CD4-positive, alpha-beta T cell (primary cell): ENCODE measurements at regions of chr19 and their contacts with region 1.

Region 1: GRCh38 chr19:11558881-11559828 is at the start of gene ELOF1:
- DNase-seq: peak; percentile 90 to 99 (median 96)
- ATAC-seq: peak; percentile 93
- H3K4me3 ChIP-seq: peak within 1 kb of the TSS; percentile 94
- H3K4me3 Mint-ChIP-seq: peak within 1 kb of the TSS; percentile 96
- H3K27ac ChIP-seq: peak within 1 kb of the TSS; percentile 47 to 64
- H3K27ac Mint-ChIP-seq: peak within 1 kb of the TSS; percentile 79
- H3K4me1 ChIP-seq: peaks cover 40% of the 10 kb centered on the region
- H3K4me1 Mint-ChIP-seq: peaks cover 41% of the 10 kb centered on the region
- H3K27me3 ChIP-seq: no peaks in the 10 kb centered on the region
- H3K27me3 Mint-ChIP-seq: no peaks in the 10 kb centered on the region
- CTCF ChIP-seq: no peak
- total RNA-seq, gene ELOF1: 31.8 to 33.2 TPM

Region 2: GRCh38 chr19:11528551-11529341 is 30.4 kb before region 1 on chr19 and contains the start of gene ECSIT:
- CTCF ChIA-PET with region 1: interaction called, 4 read pairs
- POLR2A ChIA-PET with region 1: interaction called, 10 read pairs
- intact Hi-C with region 1: loop called (anchors 2 kb)
- DNase-seq: peak; percentile 85 to 96 (median 88)
- ATAC-seq: peak; percentile 99
- H3K4me3 ChIP-seq: peak within 1 kb of the TSS; percentile 70
- H3K4me3 Mint-ChIP-seq: peak within 1 kb of the TSS; percentile 97
- H3K27ac ChIP-seq: peak within 1 kb of the TSS; percentile 71 to 78
- H3K27ac Mint-ChIP-seq: peak within 1 kb of the TSS; percentile 93
- H3K4me1 ChIP-seq: peaks cover 19% of the 10 kb centered on the region
- H3K4me1 Mint-ChIP-seq: peaks cover 20% of the 10 kb centered on the region
- H3K27me3 ChIP-seq: no peaks in the 10 kb centered on the region
- H3K27me3 Mint-ChIP-seq: no peaks in the 10 kb centered on the region
- CTCF ChIP-seq: no peak
- total RNA-seq, gene ECSIT: 27.2 to 27.4 TPM

Region 3: DNA sequence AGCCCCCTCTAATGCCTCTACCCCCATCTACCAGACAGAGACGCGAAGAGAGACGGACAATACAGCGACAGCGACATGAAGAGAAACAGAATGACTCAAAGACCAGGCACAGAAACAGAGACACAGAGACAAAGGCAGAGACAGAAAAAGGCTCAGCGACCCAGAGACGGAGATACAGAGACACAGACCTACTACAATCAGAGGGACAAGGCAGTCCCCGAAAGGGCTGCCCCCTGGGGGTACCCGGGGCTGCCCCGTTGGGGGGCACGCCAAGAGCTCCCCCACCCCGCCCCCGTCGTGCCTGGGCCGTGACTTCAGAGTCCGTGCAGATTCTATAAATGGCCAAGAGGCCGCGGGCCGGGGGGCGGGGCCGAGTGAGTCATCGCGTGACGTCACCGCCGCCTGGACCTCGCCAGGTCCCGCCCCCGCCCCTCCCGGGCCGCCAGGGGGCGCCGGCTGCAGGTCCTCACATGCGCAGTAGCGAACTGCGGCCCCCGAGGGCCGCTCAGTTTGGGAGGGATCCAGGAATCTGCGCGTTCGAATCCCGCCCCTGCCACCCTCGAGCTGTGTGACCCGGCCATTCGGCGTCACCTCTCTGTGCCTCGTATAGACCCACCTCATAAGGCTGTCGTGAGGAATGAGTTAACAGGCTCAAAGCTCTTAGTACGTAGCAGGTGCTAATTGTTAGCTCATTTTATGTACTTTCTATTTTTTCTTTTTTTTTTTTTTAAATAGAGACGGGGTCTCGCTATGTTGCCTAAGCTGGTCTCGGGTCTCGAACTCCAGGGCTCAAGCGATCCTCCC is 23.2 kb before region 1 on chr19:
- CTCF ChIA-PET with region 1: interaction called, 5 read pairs
- POLR2A ChIA-PET with region 1: interaction called, 8 read pairs
- intact Hi-C with region 1: loop called in 1 of 2 experiments (anchors 1 kb)
- DNase-seq: peak; percentile 59 to 92 (median 79)
- ATAC-seq: peak; percentile 84
- H3K4me3 ChIP-seq: peak overlapping the region; percentile 24
- H3K4me3 Mint-ChIP-seq: peak overlapping the region; percentile 71
- H3K27ac ChIP-seq: no peak overlapping the region
- H3K27ac Mint-ChIP-seq: peak overlapping the region; percentile 48
- H3K4me1 ChIP-seq: peaks cover 21% of the 10 kb centered on the region
- H3K4me1 Mint-ChIP-seq: peaks cover 12% of the 10 kb centered on the region
- H3K27me3 ChIP-seq: peaks cover 17 to 18% of the 10 kb centered on the region in 2 experiments
- H3K27me3 Mint-ChIP-seq: peaks cover 20% of the 10 kb centered on the region
- CTCF ChIP-seq: peak; percentile 87

Region 4: DNA sequence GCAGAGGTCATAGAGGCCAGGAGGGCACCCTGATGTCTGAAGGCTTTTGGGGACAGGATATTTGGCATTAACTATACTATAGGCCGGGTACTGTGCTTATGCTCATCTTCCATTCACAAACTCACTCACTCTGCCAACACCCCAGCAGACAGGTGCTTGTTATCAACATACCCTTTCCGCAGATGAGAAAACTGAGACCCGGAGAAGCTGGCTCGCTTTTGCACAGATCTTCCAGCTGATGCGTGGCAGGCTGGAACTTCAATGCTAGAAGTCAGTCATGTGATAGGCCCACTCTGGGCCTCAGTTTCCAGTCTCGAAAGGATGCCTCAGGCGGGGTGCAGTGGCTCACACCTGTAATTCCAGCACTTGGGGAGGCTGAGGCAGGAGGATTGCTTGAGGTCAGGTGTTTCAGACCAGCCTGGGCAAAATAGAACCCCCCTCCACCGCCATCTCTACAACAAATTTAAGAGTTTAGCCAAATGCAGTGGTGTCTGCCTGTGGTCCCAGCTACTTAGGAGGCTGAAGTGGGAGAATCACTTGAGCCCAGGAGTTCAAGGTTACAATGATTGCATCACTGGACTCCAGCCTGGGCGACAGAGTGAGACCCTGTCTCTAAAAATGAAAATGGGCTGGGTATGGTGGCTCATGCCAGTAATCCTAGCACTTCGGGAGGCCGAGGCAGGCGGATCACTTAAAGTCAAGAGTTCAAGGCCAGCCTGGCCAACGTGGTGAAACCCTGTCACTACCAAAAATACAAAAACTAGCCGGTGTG is 11.0 kb before region 1 on chr19:
- CTCF ChIA-PET with region 1: no interaction called
- POLR2A ChIA-PET with region 1: no interaction called
- intact Hi-C with region 1: no loop called
- DNase-seq: no peak
- ATAC-seq: no peak
- H3K4me3 ChIP-seq: no peak overlapping the region
- H3K4me3 Mint-ChIP-seq: no peak overlapping the region
- H3K27ac ChIP-seq: no peak overlapping the region
- H3K27ac Mint-ChIP-seq: no peak overlapping the region
- H3K4me1 ChIP-seq: no peaks in the 10 kb centered on the region
- H3K4me1 Mint-ChIP-seq: no peaks in the 10 kb centered on the region
- H3K27me3 ChIP-seq: no peaks in the 10 kb centered on the region
- H3K27me3 Mint-ChIP-seq: peaks cover 5% of the 10 kb centered on the region
- CTCF ChIP-seq: no peak

Region 5: GRCh38 chr19:11578258-11579142 is 19.3 kb after region 1 on chr19:
- CTCF ChIA-PET with region 1: interaction called, 8 read pairs
- POLR2A ChIA-PET with region 1: interaction called, 8 read pairs
- intact Hi-C with region 1: loop called in 1 of 2 experiments (anchors 2 kb)
- DNase-seq: peak in 13 of 14 experiments; percentile 11 to 61 (median 37)
- ATAC-seq: peak; percentile 60
- H3K4me3 ChIP-seq: peak overlapping the region; percentile 74
- H3K4me3 Mint-ChIP-seq: peak overlapping the region; percentile 87
- H3K27ac ChIP-seq: peak overlapping the region; percentile 40 to 53
- H3K27ac Mint-ChIP-seq: peak overlapping the region; percentile 86
- H3K4me1 ChIP-seq: peaks cover 41% of the 10 kb centered on the region
- H3K4me1 Mint-ChIP-seq: peaks cover 23% of the 10 kb centered on the region
- H3K27me3 ChIP-seq: no peaks in the 10 kb centered on the region
- H3K27me3 Mint-ChIP-seq: no peaks in the 10 kb centered on the region
- CTCF ChIP-seq: no peak